Activated T-helper 1 cell treated with anti-CD3 and anti-CD28 coated beads, Interleukin-12 subunit alpha, Interleukin-12 subunit beta, Interleukin-2, Interleukin-4 antibody, amounts not matched to agents 30 ng/mL and 10 ng/mL and 1 ng/mL, durations not matched to agents 14 hours and 24 hours and 36 hours (primary cell): ENCODE measurements at regions of chr3 and their contacts with region 1.

Region 1: DNA sequence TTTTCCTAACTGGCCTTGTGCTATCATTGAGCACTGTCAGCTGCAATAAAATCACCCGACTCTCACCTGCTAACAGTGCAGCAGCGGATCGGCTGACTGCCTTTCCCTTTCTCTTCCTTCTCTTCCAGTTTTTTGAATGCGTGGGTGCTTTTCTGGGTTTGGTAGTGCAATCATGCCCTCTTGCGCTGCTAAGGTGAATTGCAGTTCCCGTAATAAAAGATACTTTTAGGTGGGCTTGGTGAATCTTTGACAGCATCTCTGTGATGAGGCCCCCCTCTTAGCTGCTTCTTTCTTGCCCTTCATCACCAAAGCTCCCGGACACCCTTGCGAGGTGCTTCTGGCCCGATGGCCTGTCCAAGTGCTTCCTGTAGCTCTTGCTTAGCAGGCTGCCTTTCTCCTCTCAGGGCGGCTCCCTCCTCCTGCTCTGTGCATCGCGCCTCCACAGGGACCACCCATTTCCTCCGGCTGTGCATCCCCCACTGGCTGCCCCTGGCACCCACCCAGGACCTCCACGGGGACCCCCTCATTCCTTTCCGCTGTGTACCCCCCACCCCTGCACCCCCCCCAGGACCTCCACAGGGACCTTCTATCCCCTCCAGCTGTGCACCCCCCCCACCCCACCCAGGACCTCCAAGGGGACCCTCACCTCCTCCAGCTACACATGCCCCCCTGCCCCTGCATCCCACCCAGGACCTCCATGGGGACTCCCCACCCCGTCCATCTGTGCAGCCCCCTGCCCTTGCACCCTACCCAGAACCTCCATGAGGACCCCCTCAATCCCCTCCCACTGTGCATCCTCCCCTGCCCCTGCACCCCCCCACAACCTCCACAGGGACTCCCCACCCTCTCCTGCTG is 50.8 kb upstream of the RPL32 start:
- DNase-seq: peak; percentile 16
- H3K4me3 Mint-ChIP-seq: no peak overlapping the region
- H3K27ac Mint-ChIP-seq: no peak overlapping the region
- H3K4me1 Mint-ChIP-seq: peaks cover 5% of the 10 kb centered on the region
- H3K27me3 Mint-ChIP-seq: peaks cover 39% of the 10 kb centered on the region

Region 2: DNA sequence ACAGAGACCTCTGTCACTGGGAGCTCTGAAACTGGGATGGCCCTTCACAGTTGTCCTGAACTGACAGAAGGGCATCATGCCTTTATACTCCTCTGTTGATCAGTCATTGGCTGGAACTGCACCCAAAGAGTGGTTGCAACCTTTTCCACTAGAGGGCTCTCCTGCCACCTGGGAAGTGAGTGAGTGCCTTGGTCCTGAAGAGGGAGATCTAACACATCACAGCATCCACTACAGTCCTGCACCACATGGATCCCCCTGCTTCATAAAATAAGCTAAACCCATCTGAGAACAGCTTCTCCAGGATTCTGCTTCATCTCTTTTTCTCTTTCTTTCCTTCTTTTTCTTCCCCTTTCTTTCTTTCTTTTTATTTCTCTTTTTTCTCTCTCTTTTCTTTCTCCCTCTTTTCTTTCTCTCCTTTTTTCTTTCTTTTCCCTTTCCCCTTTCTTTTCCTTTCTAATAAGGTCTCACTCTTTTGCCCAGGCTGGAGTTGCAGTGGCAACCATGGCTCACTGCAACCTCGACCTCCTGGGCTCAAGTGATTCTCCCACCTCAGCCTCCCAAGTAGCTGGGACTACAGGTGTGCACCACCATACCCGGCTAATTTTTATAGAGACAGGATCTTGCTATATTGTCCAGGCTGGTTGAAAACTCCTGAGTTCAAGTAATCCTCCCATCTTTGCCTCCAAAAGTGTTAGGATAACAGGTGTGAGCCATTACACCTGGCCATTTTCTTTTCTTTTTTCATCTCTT is 185.5 kb before region 1 on chr3:
- intact Hi-C with region 1: loop called (anchors 1 kb)
- DNase-seq: peak; percentile 53
- H3K4me3 Mint-ChIP-seq: no peak overlapping the region
- H3K27ac Mint-ChIP-seq: no peak overlapping the region
- H3K4me1 Mint-ChIP-seq: no peaks in the 10 kb centered on the region
- H3K27me3 Mint-ChIP-seq: peaks cover 8% of the 10 kb centered on the region

Region 3: DNA sequence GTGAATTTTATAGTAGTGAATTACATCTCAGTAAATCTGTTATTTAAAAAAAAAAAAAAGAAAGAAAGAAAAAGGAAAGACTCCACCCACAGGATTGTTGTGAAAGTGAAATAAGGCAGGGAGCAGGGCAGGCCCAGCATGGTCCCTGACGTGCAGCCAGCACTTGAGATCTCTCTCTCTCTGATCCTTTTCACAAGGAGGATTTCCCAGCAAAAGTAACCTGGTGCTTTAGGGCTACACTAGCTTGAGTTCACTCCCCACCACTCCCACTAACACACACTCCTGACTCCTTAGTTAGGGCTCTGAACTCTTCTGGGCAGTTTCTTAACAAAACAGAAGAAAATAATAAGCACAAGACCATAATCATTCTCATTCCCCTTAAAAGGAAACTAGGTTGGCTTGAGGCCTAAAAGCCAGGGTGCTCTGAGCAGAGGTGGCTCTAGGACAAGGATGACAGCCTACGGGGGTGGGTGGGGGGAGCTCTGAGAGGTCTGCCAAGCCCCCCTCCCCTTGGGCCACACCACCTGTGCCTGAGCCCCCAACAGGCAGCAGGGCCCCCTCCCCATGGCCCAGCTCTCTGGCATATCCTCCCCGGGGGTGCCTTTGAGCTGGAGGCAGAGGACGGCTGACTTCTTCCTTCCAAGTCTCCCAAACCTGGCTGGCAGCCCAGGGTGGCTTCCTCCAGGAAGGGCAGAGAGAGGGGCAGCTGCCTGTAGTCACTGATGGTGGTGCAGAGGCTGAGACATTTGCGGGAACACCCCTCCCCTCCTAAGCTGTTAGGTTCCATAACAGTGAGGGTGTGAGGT is 134.0 kb before region 1 on chr3:
- intact Hi-C with region 1: no loop called
- DNase-seq: no peak
- H3K4me3 Mint-ChIP-seq: no peak overlapping the region
- H3K27ac Mint-ChIP-seq: no peak overlapping the region
- H3K4me1 Mint-ChIP-seq: no peaks in the 10 kb centered on the region
- H3K27me3 Mint-ChIP-seq: peaks cover 4% of the 10 kb centered on the region

Region 4: GRCh38 chr3:12782172-12782815 is 109.9 kb before region 1 on chr3:
- intact Hi-C with region 1: loop called (anchors 1 kb)
- DNase-seq: no peak
- H3K4me3 Mint-ChIP-seq: no peak overlapping the region
- H3K27ac Mint-ChIP-seq: no peak overlapping the region
- H3K4me1 Mint-ChIP-seq: no peaks in the 10 kb centered on the region
- H3K27me3 Mint-ChIP-seq: peaks cover 14% of the 10 kb centered on the region

Region 5: DNA sequence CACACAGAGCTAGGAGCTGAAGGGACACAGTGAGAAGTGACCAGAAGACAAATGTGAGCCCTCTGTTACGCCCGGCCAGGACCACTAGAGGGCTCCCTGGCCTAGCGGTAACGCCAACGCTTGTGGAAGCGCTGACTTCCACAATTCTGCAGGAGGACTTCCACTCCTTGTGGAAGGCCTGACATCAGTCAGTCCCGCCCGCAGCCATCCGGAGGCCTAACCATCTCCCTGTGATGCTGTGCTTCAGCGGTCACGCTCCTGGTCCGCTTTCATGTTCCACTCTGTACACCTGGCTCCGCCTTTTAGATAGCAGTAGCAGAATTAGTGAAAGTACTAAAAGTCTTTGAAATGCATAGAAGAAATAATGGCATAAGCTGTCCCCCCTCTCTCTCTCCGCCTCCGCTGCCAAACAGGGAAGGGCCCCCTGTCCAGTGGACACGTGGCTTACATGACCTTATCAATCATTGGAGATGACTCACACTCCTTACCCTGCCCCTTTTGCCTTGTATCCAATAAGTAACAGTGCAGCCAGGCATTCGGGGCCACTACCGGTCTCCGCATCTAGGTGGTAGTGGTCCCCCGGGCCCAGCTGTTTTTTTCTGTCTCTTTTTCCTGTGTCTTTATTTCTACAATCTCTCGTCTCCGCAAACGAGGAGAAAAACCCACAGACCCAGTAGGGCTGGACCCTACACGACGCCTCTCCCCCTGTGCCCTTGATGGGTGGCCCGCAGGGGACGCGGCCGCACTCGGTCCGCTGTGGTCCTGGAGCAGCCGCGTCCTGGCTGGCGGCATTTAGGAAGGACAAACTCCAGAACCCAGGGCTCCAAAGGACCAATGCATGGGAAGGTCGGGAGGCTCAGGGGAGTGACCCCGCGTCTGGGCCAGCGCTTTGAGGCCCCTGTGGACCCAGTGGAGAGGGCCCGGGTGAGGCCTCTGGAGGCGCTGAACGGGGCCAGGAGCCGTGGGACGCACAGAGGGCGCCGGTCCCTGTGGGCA is 23.9 kb before region 1 on chr3:
- intact Hi-C with region 1: loop called (anchors 1 kb)
- DNase-seq: peak; percentile 43
- H3K4me3 Mint-ChIP-seq: peak overlapping the region; percentile 65
- H3K27ac Mint-ChIP-seq: no peak overlapping the region
- H3K4me1 Mint-ChIP-seq: peaks cover 17% of the 10 kb centered on the region
- H3K27me3 Mint-ChIP-seq: peaks cover 29% of the 10 kb centered on the region

Region 6: GRCh38 chr3:12984023-12984823 is 92.0 kb after region 1 on chr3:
- intact Hi-C with region 1: loop called (anchors 5 kb)
- DNase-seq: peak; percentile 44
- H3K4me3 Mint-ChIP-seq: no peak overlapping the region
- H3K27ac Mint-ChIP-seq: no peak overlapping the region
- H3K4me1 Mint-ChIP-seq: peaks cover 38% of the 10 kb centered on the region
- H3K27me3 Mint-ChIP-seq: no peaks in the 10 kb centered on the region